Posterior vena cava (tissue), 2 donors: ENCODE measurements at regions of chr1 and their contacts with region 1.

Region 1: DNA sequence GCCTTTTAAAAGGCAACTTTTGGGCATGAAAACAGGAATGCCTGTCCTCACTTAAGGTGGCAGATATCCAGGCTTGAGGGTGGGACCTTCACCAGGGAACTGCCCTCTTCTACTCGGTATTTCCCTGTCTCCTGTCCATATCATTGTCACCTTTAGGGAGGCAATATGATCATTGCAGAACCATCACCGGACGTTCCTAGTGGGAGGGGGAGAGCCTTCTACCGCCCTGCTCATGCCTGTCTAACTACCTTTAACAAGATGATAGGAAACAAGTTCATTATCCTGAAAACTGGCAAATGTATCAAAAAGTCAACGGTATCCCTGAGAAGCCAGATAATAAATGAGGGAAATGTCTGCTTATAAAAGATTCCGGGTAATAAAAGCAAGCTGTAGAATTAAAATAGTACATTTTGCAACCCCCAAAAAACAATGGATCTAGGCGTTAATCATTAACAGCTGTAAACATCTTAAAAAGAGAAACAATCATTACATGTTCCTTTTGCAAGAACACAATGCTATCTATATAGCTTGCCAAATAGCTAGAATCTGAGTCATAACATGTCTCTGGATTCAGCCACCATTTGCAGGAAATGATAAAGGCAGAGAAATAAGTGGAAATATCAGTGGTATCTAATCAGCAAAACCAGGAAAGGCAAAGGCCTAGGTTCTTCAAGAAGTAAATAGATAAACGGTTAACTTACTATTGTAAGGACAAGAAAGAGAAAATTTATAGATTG is 852.9 kb upstream of the ADGRL4 start:
- DNase-seq: no peak

Region 2: DNA sequence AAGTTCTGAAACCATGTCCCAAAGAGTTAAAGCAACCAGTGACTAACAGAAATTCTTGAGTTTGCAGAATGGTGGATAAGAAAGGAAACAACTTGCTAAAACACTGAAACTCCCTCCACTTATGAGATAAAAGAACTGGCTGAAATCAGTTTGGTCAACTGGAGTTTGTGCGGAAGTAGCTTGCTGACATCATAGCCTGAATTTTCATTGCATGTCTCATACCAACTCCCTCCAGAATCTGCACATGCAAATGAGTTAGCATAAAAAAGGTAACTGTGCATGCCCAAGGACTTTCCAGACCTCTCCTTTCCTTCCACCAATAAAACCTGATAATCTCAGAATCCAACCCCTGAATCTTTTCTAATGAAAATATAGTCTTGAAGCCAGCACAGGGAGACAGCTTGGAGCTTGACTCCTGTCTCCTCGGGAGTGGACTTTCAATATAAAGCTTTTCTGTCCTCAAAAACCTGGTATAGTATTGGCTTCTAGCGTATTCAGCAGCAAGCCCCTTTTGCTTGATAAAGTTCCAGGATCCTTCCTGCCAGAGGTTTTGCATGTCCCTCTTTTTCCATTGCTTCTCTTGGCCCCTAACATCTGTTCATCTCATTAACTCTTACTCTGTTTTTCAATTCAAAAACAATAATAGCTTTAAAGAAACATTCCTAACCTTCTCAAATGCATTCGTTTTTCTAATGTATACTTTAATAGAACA is 67.0 kb before region 1 on chr1:
- intact Hi-C with region 1: loop called in 1 of 2 experiments (anchors 2 kb)
- DNase-seq: no peak

Region 3: GRCh38 chr1:80066060-80066459 is 206.7 kb after region 1 on chr1:
- intact Hi-C with region 1: no loop called
- DNase-seq: no peak